ENCODE measurements at regions of chr1 and their contacts with region 1.

Region 1: GRCh38 chr1:113780279-113781146 is 21.2 kb upstream of the PHTF1 start:
- DNase-seq: no peak
- ATAC-seq: no peak
- H3K4me3 ChIP-seq: no peak overlapping the region
- H3K4me3 Mint-ChIP-seq: no peak overlapping the region
- H3K27ac ChIP-seq: peak overlapping the region in 1 of 2 donors; percentile 23
- H3K27ac Mint-ChIP-seq: no peak overlapping the region
- H3K4me1 ChIP-seq: peaks cover 30 to 32% of the 10 kb centered on the region in 2 donors
- H3K4me1 Mint-ChIP-seq: peaks cover 19% of the 10 kb centered on the region
- H3K27me3 ChIP-seq: no peaks in the 10 kb centered on the region
- H3K27me3 Mint-ChIP-seq: no peaks in the 10 kb centered on the region
- CTCF ChIP-seq: no peak

Region 2: DNA sequence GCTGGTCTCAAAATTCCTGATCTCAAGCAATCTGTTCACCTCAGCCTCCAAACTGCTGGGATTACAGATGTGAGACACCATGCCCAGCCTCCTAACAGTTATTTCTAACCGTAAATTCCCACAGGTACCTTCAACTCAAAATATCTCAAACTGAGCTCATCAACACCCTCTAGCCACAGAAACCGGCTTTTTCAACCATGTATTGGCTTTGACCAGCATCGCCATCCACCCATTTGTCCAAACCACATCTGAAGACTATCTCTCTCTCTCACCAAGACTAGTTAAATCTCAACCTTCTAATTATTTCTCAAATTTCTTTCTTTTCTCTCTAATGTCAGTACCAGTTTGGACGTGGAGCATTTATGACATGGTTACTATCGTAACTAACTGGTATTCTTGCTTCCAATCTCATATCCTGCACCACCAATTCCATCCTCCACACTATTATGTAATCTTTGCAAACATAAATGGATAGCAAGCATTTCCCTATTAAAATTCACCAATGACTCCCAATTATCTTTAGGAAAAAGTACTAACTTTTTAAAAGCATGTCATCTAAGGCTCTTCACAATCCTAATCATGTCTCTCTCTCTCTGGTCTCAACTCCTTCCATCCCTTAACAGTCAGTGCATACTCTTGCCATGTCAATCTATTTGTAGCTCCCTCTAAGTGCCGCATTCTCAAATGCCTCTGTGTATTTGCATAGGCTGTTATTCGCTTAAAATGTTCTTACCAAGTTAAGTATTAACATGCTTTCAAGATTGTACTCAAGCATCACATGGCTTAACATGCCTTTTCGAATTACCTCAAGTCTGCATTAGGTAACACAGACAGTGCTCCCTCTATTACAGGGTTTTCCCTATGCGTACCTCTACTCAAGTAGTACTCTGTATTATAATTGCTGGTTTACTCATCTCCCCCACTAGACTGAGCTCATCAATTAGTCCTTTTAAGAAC is 13.6 kb after region 1 on chr1:
- CTCF ChIA-PET with region 1: no interaction called
- POLR2A ChIA-PET with region 1: interaction called, 3 read pairs
- intact Hi-C with region 1: loop called (anchors 2 kb)
- DNase-seq: no peak
- ATAC-seq: no peak
- H3K4me3 ChIP-seq: no peak overlapping the region
- H3K4me3 Mint-ChIP-seq: no peak overlapping the region
- H3K27ac ChIP-seq: no peak overlapping the region
- H3K27ac Mint-ChIP-seq: no peak overlapping the region
- H3K4me1 ChIP-seq: peaks cover 0 to 2% of the 10 kb centered on the region in 2 donors
- H3K4me1 Mint-ChIP-seq: peaks cover 27% of the 10 kb centered on the region
- H3K27me3 ChIP-seq: no peaks in the 10 kb centered on the region
- H3K27me3 Mint-ChIP-seq: no peaks in the 10 kb centered on the region
- CTCF ChIP-seq: no peak

Measured in B cell (primary cell).